ENCODE measurements at regions of chr12 and their contacts with region 1.

Region 1: DNA sequence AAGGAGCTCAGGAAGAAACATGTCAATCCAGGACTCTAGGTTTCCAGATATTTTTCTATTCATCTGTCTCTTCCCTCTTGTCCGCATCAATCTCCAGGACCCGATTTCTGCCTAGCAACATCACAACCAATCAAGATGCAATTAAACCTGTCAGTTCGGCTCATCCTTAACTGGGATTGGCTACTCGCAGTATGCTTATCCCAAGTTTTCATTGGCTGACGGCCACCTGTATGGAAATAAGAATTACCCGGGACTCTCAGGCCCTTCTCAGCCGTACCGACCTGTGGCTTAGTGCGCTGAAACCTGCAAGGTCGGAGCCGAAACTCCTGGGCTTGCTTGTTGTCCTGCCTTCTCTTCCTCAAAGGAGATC is 20.4 kb upstream of the ATP5MC2 start:
- DNase-seq: no peak
- ATAC-seq: peak; percentile 92
- H3K4me3 ChIP-seq: peak overlapping the region in 1 of 2 experiments; percentile 29; a peak in 2 of 4 replicates
- H3K27ac ChIP-seq: no peak overlapping the region
- H3K4me1 ChIP-seq: peaks cover 4% of the 10 kb centered on the region; the same call in 1 of the 2 replicates
- H3K27me3 ChIP-seq: peaks cover 10% of the 10 kb centered on the region
- CTCF ChIP-seq: no peak

Region 2: DNA sequence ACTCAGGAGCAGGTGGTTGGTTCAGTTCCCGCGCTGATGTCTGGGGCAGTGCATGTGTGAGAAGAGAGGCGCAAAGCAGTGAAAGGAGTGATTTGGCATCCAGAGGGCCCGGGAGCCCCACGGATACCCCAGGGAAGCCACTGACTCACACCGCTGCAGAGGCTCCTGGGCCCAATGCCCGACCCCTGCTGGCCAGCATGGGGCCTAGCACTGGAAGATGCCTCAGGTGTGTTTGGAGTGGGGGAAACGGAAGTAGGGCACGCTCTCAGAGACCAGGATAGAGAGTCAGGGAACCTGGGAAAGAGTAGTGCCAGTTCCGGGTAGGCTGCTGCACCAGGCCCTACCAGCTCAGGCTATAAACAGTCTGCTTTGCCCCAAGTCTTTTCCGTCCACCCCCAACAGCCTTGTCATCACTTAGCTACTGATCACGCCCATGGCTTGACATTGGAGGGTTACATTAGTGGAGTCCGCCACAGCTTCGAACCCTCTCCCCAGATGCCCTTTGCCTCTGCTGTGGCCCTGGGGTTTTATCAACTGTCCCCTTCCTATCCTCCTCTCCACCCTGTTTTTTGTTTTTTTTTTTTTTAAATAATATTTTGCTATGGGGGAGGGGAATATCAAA is 506.1 kb before region 1 on chr12:
- CTCF ChIA-PET with region 1: no interaction called
- POLR2A ChIA-PET with region 1: no interaction called
- in situ Hi-C with region 1: no loop called
- intact Hi-C with region 1: no loop called
- DNase-seq: no peak
- ATAC-seq: peak; percentile 83
- H3K4me3 ChIP-seq: no peak overlapping the region
- H3K27ac ChIP-seq: peak overlapping the region; percentile 0; the same call in 1 of the 2 replicates
- H3K4me1 ChIP-seq: no peaks in the 10 kb centered on the region
- H3K27me3 ChIP-seq: no peaks in the 10 kb centered on the region
- CTCF ChIP-seq: peak; percentile 89

Region 3: DNA sequence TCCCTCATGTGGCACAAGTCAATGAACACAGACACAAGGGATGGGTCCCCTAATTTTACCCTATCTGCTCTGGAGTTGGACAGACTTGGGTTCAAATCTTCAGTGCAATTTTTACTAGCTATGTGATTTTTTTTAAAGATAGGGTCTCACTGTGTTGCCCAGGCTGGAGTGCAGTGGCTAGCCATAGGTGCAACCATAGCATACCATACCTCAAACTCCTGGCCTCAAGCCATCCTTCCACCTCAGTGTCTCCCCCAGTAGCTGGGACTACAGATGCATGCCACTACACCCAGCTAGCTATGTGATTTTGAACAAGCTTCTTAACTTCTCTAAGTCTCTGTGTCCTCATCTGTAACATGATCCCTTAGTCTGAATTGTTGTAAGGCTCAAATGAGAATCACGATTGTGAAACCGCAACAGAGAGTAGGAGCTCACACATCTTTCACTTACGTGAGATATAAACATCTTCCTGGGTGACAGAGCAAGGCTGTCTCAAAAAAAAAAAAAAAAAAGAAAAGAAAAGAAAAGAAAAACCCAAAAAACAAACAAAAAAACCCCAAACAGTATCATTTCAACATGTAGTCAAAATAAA is 26.3 kb after region 1 on chr12:
- CTCF ChIA-PET with region 1: no interaction called
- POLR2A ChIA-PET with region 1: no interaction called
- in situ Hi-C with region 1: no loop called
- intact Hi-C with region 1: no loop called
- DNase-seq: no peak
- ATAC-seq: no peak
- H3K4me3 ChIP-seq: no peak overlapping the region
- H3K27ac ChIP-seq: no peak overlapping the region
- H3K4me1 ChIP-seq: peaks cover 8% of the 10 kb centered on the region
- H3K27me3 ChIP-seq: no peaks in the 10 kb centered on the region
- CTCF ChIP-seq: no peak

Region 4: GRCh38 chr12:54306925-54307741 is 610.9 kb after region 1 on chr12:
- CTCF ChIA-PET with region 1: no interaction called
- POLR2A ChIA-PET with region 1: interaction called, 10 read pairs
- in situ Hi-C with region 1: no loop called
- intact Hi-C with region 1: no loop called
- DNase-seq: no peak
- ATAC-seq: peak; percentile 62
- H3K4me3 ChIP-seq: no peak overlapping the region
- H3K27ac ChIP-seq: no peak overlapping the region
- H3K4me1 ChIP-seq: no peaks in the 10 kb centered on the region
- H3K27me3 ChIP-seq: no peaks in the 10 kb centered on the region
- CTCF ChIP-seq: no peak